ENCODE measurements at regions of chr20 and their contacts with region 1.

Region 1: GRCh38 chr20:34768096-34768495 is 57.4 kb downstream of the NCOA6 start:
- DNase-seq: no peak
- ATAC-seq: no peak
- H3K4me3 Mint-ChIP-seq: no peak overlapping the region
- H3K27ac Mint-ChIP-seq: no peak overlapping the region
- H3K4me1 Mint-ChIP-seq: peaks cover 1% of the 10 kb centered on the region
- H3K27me3 Mint-ChIP-seq: no peaks in the 10 kb centered on the region

Region 2: GRCh38 chr20:34538671-34539123 is 229.4 kb before region 1 on chr20:
- CTCF ChIA-PET with region 1: interaction called, 10 read pairs
- DNase-seq: peak; percentile 65
- ATAC-seq: peak; percentile 42
- H3K4me3 Mint-ChIP-seq: no peak overlapping the region
- H3K27ac Mint-ChIP-seq: no peak overlapping the region
- H3K4me1 Mint-ChIP-seq: peaks cover 9% of the 10 kb centered on the region
- H3K27me3 Mint-ChIP-seq: no peaks in the 10 kb centered on the region

Region 3: GRCh38 chr20:34720266-34720665 is 47.8 kb before region 1 on chr20:
- CTCF ChIA-PET with region 1: interaction called, 15 read pairs
- DNase-seq: no peak
- ATAC-seq: no peak
- H3K4me3 Mint-ChIP-seq: no peak overlapping the region
- H3K27ac Mint-ChIP-seq: no peak overlapping the region
- H3K4me1 Mint-ChIP-seq: peaks cover 25% of the 10 kb centered on the region
- H3K27me3 Mint-ChIP-seq: no peaks in the 10 kb centered on the region

Region 4: DNA sequence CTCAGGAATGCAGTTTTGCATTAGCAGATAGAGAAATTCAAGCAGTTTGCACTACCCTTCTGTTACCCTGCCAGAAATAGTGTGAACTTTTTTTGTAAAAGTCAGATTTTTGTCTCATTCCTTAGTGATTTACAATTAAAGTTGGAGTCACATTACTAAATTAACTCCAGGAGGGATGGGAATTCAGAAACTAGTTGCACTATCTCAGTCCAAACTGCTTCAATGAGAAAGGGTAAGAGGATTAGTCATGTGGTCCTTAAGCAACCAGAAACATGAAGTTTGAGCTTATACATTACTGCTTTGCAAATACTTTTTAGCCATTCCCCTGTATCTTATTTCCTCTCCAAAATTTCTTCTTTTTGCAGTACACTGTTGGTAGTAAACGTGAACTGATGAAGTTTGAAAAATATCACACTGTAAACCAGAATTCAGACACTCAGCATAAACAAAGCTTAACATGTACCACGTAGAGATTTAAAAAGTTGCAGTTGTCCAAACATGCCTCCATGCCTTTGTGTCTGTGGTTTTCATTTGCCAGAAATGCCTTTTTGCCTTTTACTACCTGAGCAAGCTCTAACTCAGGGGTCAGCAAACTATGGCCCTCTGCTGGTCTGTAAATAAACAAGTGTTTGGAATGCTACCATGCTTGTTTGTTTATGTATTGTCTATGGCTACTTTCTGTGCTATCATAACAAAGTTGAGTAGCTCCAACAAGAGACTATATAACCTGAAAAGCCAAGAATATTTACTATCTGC is 14.2 kb before region 1 on chr20:
- CTCF ChIA-PET with region 1: interaction called, 18 read pairs
- DNase-seq: no peak
- ATAC-seq: no peak
- H3K4me3 Mint-ChIP-seq: no peak overlapping the region
- H3K27ac Mint-ChIP-seq: no peak overlapping the region
- H3K4me1 Mint-ChIP-seq: no peaks in the 10 kb centered on the region
- H3K27me3 Mint-ChIP-seq: no peaks in the 10 kb centered on the region

Region 5: GRCh38 chr20:34791289-34792020 is 23.4 kb after region 1 on chr20:
- CTCF ChIA-PET with region 1: interaction called, 13 read pairs
- DNase-seq: no peak
- ATAC-seq: no peak
- H3K4me3 Mint-ChIP-seq: no peak overlapping the region
- H3K27ac Mint-ChIP-seq: no peak overlapping the region
- H3K4me1 Mint-ChIP-seq: no peaks in the 10 kb centered on the region
- H3K27me3 Mint-ChIP-seq: no peaks in the 10 kb centered on the region

Region 6: DNA sequence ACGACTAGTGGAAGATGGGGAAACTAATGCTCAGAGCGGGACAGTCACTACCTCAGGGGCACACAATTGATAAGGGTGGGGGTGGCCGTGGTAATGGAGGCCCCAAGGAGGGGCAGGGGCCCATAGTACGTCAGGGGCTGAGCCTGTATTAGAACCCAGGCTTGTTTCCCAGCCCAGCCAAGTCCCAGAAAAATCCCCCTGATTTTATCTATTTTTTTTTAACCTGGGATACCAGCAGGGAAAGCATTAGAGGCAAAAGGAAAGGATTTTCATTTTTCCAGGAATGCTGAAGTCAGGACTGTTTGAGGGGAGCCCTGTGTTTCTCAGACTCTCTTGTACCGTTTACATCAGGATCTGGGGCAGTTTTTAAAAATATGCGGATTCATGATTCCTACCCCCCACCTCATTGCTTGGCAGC is 188.0 kb after region 1 on chr20:
- CTCF ChIA-PET with region 1: no interaction called
- DNase-seq: no peak
- ATAC-seq: no peak
- H3K4me3 Mint-ChIP-seq: peak overlapping the region; percentile 97
- H3K27ac Mint-ChIP-seq: peak overlapping the region; percentile 93
- H3K4me1 Mint-ChIP-seq: peaks cover 28% of the 10 kb centered on the region
- H3K27me3 Mint-ChIP-seq: no peaks in the 10 kb centered on the region